ENCODE measurements at regions of chr5 and their contacts with region 1.

Region 1: DNA sequence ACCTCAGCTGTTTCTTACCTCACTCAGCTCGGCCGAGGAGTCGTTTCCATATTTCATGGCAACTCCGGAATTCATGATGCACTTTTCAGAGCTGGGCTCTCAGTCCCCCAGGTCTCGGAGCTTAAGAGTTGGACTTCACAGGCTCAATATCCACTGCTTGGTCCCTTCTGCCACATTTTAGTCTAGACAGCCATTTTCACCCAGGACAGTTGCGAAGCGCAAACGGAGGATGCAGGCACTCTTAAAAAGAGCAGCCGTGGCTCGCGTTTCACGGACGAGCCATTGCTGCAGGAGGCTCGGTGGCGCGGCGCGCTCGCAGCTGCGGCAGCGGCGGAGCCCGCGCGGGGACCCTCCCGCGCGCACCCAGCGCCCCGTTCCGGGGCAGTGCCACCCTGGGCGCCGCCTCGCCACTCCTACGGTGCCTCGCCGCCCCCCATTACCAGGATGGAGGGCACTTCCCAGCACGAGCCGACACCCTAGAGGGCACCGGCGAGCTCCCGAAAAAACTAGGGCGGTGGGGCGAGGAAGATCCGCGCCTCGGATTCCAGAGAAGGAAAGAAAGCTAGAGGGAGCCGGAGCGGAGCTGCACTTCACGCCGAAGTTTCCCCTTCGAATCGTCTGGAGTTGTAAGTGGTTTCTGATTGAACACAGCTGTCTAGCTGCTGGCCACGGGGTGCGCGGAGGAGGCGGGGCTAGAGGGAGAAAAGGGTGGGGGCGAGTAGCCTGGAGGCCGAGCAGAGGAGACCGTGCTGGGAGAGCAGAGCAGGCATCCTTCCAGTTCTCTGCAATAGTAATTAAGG is 140.3 kb downstream of the TSSK1B start:
- DNase-seq: peak; percentile 87
- H3K4me3 ChIP-seq: peak overlapping the region; percentile 50
- H3K27ac ChIP-seq: no peak overlapping the region
- H3K4me1 ChIP-seq: peaks cover 6% of the 10 kb centered on the region
- H3K27me3 ChIP-seq: peaks cover 56% of the 10 kb centered on the region
- CTCF ChIP-seq: peak; percentile 28; the same call in 1 of the 2 replicates

Region 2: GRCh38 chr5:113081881-113082546 is 212.5 kb before region 1 on chr5:
- CTCF ChIA-PET with region 1: no interaction called
- POLR2A ChIA-PET with region 1: no interaction called
- intact Hi-C with region 1: no loop called
- DNase-seq: no peak
- H3K4me3 ChIP-seq: no peak overlapping the region
- H3K27ac ChIP-seq: no peak overlapping the region
- H3K4me1 ChIP-seq: no peaks in the 10 kb centered on the region
- H3K27me3 ChIP-seq: no peaks in the 10 kb centered on the region
- CTCF ChIP-seq: no peak

Region 3: GRCh38 chr5:113264042-113264441 is 30.5 kb before region 1 on chr5:
- CTCF ChIA-PET with region 1: no interaction called
- POLR2A ChIA-PET with region 1: no interaction called
- intact Hi-C with region 1: no loop called
- DNase-seq: no peak
- H3K4me3 ChIP-seq: no peak overlapping the region
- H3K27ac ChIP-seq: no peak overlapping the region
- H3K4me1 ChIP-seq: no peaks in the 10 kb centered on the region
- H3K27me3 ChIP-seq: no peaks in the 10 kb centered on the region
- CTCF ChIP-seq: no peak

Region 4: DNA sequence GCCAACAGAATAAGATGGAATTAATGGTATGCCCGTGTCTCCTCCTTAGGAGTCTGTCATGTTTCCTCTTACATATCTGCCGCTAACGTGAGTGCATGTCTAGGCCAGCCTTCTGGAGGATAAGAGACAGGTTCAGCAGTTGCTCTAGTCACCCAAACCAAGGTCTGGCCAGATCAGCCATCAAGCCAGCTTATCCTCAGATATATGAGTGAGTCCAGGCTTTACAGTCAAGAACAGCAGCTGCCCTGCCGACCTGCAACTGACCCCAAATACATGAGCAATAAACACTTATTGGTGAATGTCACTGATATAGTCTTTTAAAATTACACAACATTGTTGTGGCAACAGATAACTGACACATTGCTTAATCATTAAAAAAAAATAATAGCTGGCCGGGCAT is 16.8 kb after region 1 on chr5:
- CTCF ChIA-PET with region 1: no interaction called
- POLR2A ChIA-PET with region 1: interaction called, 10 read pairs
- intact Hi-C with region 1: no loop called
- DNase-seq: no peak
- H3K4me3 ChIP-seq: no peak overlapping the region
- H3K27ac ChIP-seq: no peak overlapping the region
- H3K4me1 ChIP-seq: no peaks in the 10 kb centered on the region
- H3K27me3 ChIP-seq: peaks cover 7% of the 10 kb centered on the region
- CTCF ChIP-seq: no peak

Region 5: DNA sequence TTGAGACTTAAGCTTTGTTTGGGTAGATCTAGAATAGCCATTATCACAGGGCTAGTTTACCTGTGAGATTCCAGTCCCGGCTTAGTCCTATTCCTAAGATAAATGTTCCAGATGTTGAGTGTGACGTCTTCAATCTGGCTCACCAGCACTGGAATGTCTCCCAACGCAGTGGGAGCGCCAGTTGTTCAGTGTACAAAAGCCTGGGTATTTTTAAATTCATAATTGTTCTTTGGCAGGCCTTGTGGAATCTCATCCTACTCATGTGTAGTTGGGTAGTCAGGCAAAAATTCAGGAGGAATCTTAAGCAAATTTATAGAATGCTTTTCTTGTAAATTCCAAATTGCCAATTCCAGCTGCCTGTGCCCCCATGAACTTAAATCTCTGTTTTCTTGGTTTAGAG is 794.7 kb after region 1 on chr5:
- CTCF ChIA-PET with region 1: no interaction called
- POLR2A ChIA-PET with region 1: no interaction called
- intact Hi-C with region 1: no loop called
- DNase-seq: no peak
- H3K4me3 ChIP-seq: no peak overlapping the region
- H3K27ac ChIP-seq: no peak overlapping the region
- H3K4me1 ChIP-seq: no peaks in the 10 kb centered on the region
- H3K27me3 ChIP-seq: no peaks in the 10 kb centered on the region
- CTCF ChIP-seq: no peak

Measured in A673 (cell line).